HepG2 (cell line): ENCODE measurements at regions of chr7 and their contacts with region 1.

Region 1: DNA sequence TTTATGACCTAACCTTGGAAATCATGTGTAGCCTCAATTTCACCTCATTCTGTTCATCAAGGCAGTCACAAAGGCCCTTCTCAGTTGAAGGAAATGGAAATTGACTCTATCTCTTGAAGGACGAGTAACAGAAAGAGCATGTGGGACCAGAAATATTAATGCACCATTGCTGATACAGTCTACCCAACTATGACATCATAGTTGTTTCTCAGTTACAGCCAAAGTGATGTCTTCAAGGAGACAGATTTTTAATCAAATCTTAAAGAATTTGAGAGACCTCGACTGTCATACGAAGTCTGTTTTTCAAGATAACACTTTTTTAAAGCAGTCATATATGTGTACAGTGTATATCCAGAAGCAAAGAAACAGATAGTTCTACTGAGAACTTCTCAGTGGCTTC is 335.7 kb upstream of the PHF14 start:
- DNase-seq: no peak
- ATAC-seq: no peak
- H3K4me3 ChIP-seq: no peak overlapping the region
- H3K27ac ChIP-seq: no peak overlapping the region
- H3K4me1 ChIP-seq: no peaks in the 10 kb centered on the region
- H3K27me3 ChIP-seq: no peaks in the 10 kb centered on the region
- CTCF ChIP-seq: no peak
- EP300 ChIP-seq: no peak
- POLR2A ChIP-seq: no peak
- RAD21 ChIP-seq: no peak

Region 2: DNA sequence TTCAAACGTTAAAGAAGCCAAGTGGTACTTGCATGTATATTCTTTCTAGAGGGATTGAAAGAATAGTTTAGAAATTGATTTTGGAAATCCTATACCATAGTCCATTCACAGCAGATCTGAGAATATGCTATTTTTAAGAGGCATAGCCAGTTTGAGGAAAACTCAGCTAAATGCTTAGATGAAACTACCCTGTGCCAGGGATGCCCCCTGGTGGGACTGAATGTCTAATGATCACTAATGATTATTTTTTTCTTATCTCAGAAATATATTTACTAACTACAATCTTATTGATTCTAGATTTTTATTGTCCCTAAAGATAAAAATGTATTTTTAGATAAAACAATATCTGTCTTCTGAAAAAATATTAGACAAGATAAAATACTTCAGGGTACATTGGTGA is 509.2 kb before region 1 on chr7:
- CTCF ChIA-PET with region 1: no interaction called
- POLR2A ChIA-PET with region 1: no interaction called
- in situ Hi-C with region 1: no loop called
- intact Hi-C with region 1: no loop called
- DNase-seq: no peak
- ATAC-seq: no peak
- H3K4me3 ChIP-seq: no peak overlapping the region
- H3K27ac ChIP-seq: no peak overlapping the region
- H3K4me1 ChIP-seq: no peaks in the 10 kb centered on the region
- H3K27me3 ChIP-seq: no peaks in the 10 kb centered on the region
- CTCF ChIP-seq: no peak
- EP300 ChIP-seq: no peak
- POLR2A ChIP-seq: no peak
- RAD21 ChIP-seq: no peak

Region 3: DNA sequence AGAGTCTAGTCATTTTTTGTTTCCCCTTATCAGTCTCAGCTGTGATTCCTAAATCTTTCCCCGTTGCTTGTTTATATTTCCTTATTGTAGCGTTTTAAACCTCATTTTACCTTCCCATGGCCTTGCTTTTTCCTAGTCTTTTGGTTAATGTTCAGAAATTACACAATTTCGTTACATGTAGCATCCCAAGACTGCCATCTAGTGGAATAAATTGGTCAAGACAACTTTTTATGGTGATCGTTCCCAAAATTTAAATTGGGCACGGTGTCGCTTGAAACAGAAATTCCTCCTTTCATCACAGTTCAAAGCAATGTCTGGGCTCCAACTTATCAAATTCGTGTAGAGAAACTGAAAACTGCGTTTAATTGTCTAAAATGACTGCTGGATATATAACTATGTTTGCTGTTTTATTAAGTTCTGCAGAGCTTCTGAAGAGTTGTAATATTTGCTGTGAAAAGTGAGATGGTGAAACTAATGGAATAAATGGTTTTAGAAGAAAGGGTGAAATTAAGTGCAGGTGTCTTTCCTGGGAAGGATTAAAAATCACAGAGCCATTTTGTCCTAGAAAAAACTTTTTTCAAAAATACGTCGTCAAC is 705.9 kb after region 1 on chr7:
- CTCF ChIA-PET with region 1: no interaction called
- POLR2A ChIA-PET with region 1: no interaction called
- in situ Hi-C with region 1: no loop called
- intact Hi-C with region 1: loop called (anchors 5 kb)
- DNase-seq: peak; percentile 24
- ATAC-seq: no peak
- H3K4me3 ChIP-seq: no peak overlapping the region
- H3K27ac ChIP-seq: no peak overlapping the region
- H3K4me1 ChIP-seq: 0 out of 2 replicates have a peak, but pooled peaks cover 7% of the 10 kb centered on the region
- H3K27me3 ChIP-seq: no peaks in the 10 kb centered on the region; a peak in 1 of 5 replicates
- CTCF ChIP-seq: peak; percentile 73
- EP300 ChIP-seq: no peak
- POLR2A ChIP-seq: no peak
- RAD21 ChIP-seq: peak; percentile 34; the same call in 1 of the 2 replicates